Endothelial cell of umbilical vein (primary cell): ENCODE measurements at regions of chr12 and their contacts with region 1.

Region 1: DNA sequence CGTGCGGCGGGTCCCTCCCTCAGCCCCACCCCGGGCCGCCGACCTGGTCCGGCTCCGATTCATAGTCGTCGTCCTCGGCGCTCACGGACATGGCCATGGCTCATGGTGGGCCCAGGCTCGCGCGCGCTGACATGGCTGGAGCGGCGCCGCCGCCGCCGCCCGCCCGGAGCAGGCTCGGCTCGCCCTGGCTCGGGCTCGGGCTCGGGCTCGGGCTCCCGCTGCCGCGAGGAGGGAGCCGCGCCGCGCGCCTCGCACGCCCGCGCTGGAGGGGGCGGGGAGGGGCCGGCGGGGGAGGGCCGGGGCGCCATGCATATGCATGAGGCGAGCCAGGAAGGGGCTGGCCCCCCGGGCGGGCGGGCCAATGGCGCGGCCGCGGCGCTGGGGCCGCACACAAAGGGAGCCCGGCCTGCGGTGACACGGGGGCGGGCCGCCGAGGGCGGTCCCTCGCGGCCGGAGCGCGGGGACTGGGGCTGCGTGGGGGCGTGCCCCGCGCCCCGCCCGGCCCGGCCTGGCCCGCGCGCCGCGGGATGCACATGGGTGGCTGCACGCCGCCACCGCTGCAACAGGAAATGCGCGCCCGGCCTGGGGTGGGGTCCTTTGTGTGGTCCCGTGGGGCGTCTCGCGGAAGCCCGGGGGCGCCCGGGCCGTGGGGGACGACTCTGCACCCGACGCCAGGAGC is 67.3 kb downstream of the RNF34 start:
- DNase-seq: peak; percentile 87
- H3K4me3 ChIP-seq: peak overlapping the region; percentile 6 to 65 (median 46)
- H3K27ac ChIP-seq: peak overlapping the region; percentile 53
- H3K4me1 ChIP-seq: peaks cover 10% of the 10 kb centered on the region
- H3K27me3 ChIP-seq: no peaks in the 10 kb centered on the region
- CTCF ChIP-seq: no peak
- POLR2A ChIP-seq: peak; percentile 42

Region 2: DNA sequence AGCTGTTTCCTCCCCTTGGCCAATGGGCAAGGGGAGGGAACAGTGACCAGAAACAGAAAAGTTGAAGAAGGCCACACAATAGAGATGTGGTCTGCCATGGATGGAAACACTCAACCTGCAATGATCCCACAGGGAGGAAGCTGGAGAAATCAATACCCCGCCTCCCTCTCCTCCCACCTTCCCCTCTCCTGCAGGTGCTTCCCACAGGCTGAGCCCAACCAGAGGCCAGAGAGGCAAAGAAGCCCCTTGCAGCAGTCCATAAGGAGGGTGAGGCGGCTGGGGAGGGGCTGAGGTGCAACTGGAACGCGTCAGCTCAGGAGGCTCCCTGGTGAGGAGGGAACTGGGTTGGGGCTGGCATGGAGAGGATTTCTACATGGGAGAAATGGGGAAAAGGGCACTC is 16.7 kb after region 1 on chr12:
- CTCF ChIA-PET with region 1: interaction called, 10 read pairs
- POLR2A ChIA-PET with region 1: no interaction called
- dilution Hi-C with region 1: no loop called
- intact Hi-C with region 1: no loop called
- DNase-seq: no peak
- H3K4me3 ChIP-seq: no peak overlapping the region
- H3K27ac ChIP-seq: no peak overlapping the region
- H3K4me1 ChIP-seq: no peaks in the 10 kb centered on the region
- H3K27me3 ChIP-seq: no peaks in the 10 kb centered on the region
- CTCF ChIP-seq: no peak
- POLR2A ChIP-seq: no peak